Common myeloid progenitor, CD34-positive (primary cell): ENCODE measurements at regions of chr11 and their contacts with region 1.

Region 1: GRCh38 chr11:70378509-70379134 is 19.7 kb upstream of the CTTN start:
- DNase-seq: peak in 1 of 3 donors; percentile 35
- H3K4me3 ChIP-seq: no peak overlapping the region
- H3K27ac ChIP-seq: no peak overlapping the region
- H3K4me1 ChIP-seq: no peaks in the 10 kb centered on the region
- H3K27me3 ChIP-seq: no peaks in the 10 kb centered on the region

Region 2: DNA sequence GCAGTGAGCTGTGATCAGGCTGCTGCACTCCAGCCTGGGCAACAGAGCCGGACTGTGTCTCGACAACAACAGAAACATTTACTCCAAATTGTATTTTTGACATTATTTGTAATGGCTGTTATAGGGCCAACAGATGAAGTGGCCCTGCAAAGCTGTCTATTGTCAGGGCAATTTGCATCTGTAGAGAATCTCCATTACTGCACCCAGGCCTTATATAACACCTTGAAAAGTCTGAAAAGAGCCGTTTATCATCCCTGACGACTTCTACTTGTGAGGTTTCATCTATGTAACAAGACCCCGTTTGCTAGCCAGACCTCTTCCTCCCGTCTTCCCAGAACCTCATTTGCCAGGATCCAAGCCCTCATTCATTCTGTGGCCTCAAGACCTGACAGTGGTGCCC is 10.6 kb after region 1 on chr11:
- CTCF ChIA-PET with region 1: interaction called, 10 read pairs
- POLR2A ChIA-PET with region 1: no interaction called
- DNase-seq: no peak
- H3K4me3 ChIP-seq: no peak overlapping the region
- H3K27ac ChIP-seq: no peak overlapping the region
- H3K4me1 ChIP-seq: peaks cover 0 to 2% (median 0%) of the 10 kb centered on the region in 4 experiments
- H3K27me3 ChIP-seq: peaks cover 0 to 8% (median 7%) of the 10 kb centered on the region in 5 experiments